A673 (cell line): ENCODE measurements at regions of chrX and their contacts with region 1.

Region 1: GRCh38 chrX:153416781-153417450 is 5.6 kb downstream of the ZFP92 start:
- DNase-seq: no peak
- H3K4me3 ChIP-seq: no peak overlapping the region
- H3K27ac ChIP-seq: no peak overlapping the region
- H3K4me1 ChIP-seq: no peaks in the 10 kb centered on the region
- H3K27me3 ChIP-seq: no peaks in the 10 kb centered on the region
- CTCF ChIP-seq: no peak

Region 2: GRCh38 chrX:153321381-153322124 is 95.4 kb before region 1 on chrX and contains the start of gene PNMA6F:
- CTCF ChIA-PET with region 1: no interaction called
- POLR2A ChIA-PET with region 1: no interaction called
- intact Hi-C with region 1: no loop called
- DNase-seq: no peak
- H3K4me3 ChIP-seq: no peak within 1 kb of the TSS
- H3K27ac ChIP-seq: no peak within 1 kb of the TSS
- H3K4me1 ChIP-seq: no peaks in the 10 kb centered on the region
- H3K27me3 ChIP-seq: peaks cover 5% of the 10 kb centered on the region
- CTCF ChIP-seq: no peak
- total RNA-seq, gene PNMA6F: not detected in 2 replicates

Region 3: GRCh38 chrX:153392642-153393321 is 24.1 kb before region 1 on chrX:
- CTCF ChIA-PET with region 1: interaction called, 10 read pairs
- POLR2A ChIA-PET with region 1: no interaction called
- intact Hi-C with region 1: no loop called
- DNase-seq: no peak
- H3K4me3 ChIP-seq: no peak overlapping the region
- H3K27ac ChIP-seq: no peak overlapping the region
- H3K4me1 ChIP-seq: no peaks in the 10 kb centered on the region
- H3K27me3 ChIP-seq: no peaks in the 10 kb centered on the region
- CTCF ChIP-seq: no peak

Region 4: GRCh38 chrX:153818571-153819383 is 401.9 kb after region 1 on chrX:
- CTCF ChIA-PET with region 1: no interaction called
- POLR2A ChIA-PET with region 1: no interaction called
- intact Hi-C with region 1: no loop called
- DNase-seq: peak; percentile 61
- H3K4me3 ChIP-seq: peak overlapping the region; percentile 41
- H3K27ac ChIP-seq: peak overlapping the region; percentile 50
- H3K4me1 ChIP-seq: no peaks in the 10 kb centered on the region
- H3K27me3 ChIP-seq: no peaks in the 10 kb centered on the region
- CTCF ChIP-seq: no peak